PC-9 (cell line): ENCODE measurements at regions of chr1 and their contacts with region 1.

Region 1: DNA sequence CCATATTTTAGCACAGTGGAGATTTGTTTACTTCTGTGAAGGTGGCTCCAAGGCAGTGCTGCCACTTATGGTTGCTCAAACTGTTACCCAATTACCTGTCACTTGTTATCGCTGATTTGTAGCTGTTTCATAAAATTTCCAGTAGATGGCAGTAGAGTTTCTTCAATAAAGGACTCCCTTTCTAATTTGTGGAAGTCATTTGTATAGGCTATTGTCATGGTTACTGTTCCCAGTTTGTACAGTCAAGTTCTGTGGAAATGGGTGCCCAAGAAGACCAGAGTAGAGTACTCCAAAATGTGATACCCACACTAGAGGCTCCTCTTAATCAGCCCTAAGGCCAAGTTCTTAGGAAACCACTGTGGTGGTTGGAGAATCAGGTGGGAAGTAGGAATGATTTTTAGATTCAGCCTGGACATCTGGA is 186.1 kb downstream of the CLEC20A start:
- DNase-seq: peak; percentile 15 to 86
- H3K4me3 ChIP-seq: no peak overlapping the region
- H3K27ac ChIP-seq: no peak overlapping the region
- H3K4me1 ChIP-seq: peaks cover 34% of the 10 kb centered on the region
- H3K27me3 ChIP-seq: no peaks in the 10 kb centered on the region
- CTCF ChIP-seq: peak; percentile 88

Region 2: GRCh38 chr1:178344513-178345082 is 33.9 kb after region 1 on chr1:
- CTCF ChIA-PET with region 1: interaction called, 4 read pairs
- POLR2A ChIA-PET with region 1: no interaction called
- intact Hi-C with region 1: loop called (anchors 5 kb)
- DNase-seq: peak; percentile 23 to 70
- H3K4me3 ChIP-seq: no peak overlapping the region
- H3K27ac ChIP-seq: peak overlapping the region; percentile 56
- H3K4me1 ChIP-seq: peaks cover 43% of the 10 kb centered on the region
- H3K27me3 ChIP-seq: no peaks in the 10 kb centered on the region
- CTCF ChIP-seq: peak; percentile 52; the same call in 1 of the 2 replicates

Region 3: DNA sequence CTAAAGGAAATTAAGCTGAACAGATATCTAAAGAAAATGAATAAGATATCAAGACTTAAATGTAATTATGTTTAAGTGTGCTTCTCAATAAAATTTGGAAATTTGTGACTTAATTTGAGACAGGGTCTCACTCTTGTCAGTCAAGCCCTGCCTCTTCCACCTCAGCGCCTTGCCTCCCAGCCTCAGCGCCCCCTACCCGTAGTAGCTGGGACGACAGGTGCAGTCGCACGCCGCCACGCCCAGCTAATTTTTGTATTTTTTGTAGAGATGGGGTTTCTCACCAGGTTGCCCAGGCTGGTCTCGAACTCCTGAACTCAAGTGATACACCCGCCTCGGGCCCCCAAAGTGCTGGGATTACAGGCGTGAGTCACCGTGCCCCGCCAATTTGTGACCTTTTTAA is 69.1 kb after region 1 on chr1:
- CTCF ChIA-PET with region 1: interaction called, 18 read pairs
- POLR2A ChIA-PET with region 1: no interaction called
- intact Hi-C with region 1: no loop called
- DNase-seq: no peak
- H3K4me3 ChIP-seq: no peak overlapping the region
- H3K27ac ChIP-seq: no peak overlapping the region
- H3K4me1 ChIP-seq: peaks cover 13% of the 10 kb centered on the region
- H3K27me3 ChIP-seq: no peaks in the 10 kb centered on the region
- CTCF ChIP-seq: no peak

Region 4: DNA sequence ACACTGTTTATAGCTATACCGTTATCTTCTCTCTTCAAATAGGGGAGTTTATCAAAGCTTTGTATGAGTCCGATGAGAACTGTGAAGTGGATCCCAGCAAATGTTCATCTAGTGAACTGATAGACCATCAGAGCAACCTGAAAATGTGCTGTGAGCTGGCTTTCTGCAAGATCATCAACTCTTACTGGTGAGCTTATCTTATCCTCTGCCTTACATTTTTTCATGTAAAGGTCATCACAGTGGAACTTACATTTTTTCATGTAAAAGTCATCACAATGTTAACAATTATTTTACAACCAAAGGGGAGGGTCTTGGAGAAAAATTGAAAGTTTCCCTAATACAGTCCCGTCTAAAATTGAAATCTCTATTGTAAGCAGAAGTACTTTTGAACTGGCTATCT is 140.8 kb after region 1 on chr1:
- CTCF ChIA-PET with region 1: no interaction called
- POLR2A ChIA-PET with region 1: interaction called, 3 read pairs
- intact Hi-C with region 1: loop called (anchors 5 kb)
- DNase-seq: peak in 1 of 2 experiments; percentile 39
- H3K4me3 ChIP-seq: no peak overlapping the region
- H3K27ac ChIP-seq: no peak overlapping the region
- H3K4me1 ChIP-seq: peaks cover 10% of the 10 kb centered on the region; the same call in 1 of the 2 replicates
- H3K27me3 ChIP-seq: no peaks in the 10 kb centered on the region
- CTCF ChIP-seq: no peak

Region 5: DNA sequence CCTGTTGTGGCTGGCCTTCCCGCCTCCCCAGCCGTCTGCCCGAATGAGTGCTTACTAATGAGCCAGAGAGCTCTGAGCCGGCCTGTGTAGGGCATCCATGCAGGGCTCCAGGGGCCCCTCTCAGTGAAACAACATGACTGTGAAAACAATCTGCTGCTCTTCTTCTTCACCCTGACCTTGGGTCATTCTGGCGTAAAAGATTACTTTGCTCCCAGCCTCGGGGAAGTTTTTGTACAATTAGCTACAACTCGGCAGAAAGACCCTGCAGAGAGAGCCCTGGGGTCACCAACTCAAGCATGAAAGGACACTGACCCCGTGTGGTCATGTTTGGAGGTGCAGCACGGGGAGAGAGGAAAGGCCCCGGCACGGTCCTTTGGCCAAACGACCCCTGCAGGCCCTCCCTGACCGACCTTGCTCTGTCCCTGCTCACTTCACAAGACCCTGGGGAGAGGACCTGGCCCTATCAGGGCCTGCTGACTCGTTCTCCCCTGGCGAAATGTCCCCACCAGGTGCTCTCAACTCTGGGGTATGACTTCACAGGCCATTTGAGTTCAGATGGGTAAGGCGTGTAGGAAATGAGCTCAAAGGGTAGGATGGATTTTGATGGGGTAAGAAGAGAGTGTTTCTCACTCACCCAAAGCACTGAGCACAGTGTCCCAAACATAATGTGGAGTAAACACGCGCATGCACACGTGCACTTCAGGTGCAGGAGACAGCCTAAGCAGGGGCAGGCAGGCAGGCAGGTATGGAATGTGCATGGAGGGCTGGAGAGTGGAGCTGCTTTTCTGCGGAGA is 692.1 kb after region 1 on chr1:
- CTCF ChIA-PET with region 1: interaction called, 3 read pairs
- POLR2A ChIA-PET with region 1: no interaction called
- intact Hi-C with region 1: loop called (anchors 2 kb)
- DNase-seq: peak in 1 of 2 experiments; percentile 62
- H3K4me3 ChIP-seq: peak overlapping the region; percentile 5; the same call in 1 of the 2 replicates
- H3K27ac ChIP-seq: no peak overlapping the region
- H3K4me1 ChIP-seq: peaks cover 11% of the 10 kb centered on the region
- H3K27me3 ChIP-seq: no peaks in the 10 kb centered on the region
- CTCF ChIP-seq: peak; percentile 97

Region 6: GRCh38 chr1:179081687-179082332 is 771.1 kb after region 1 on chr1 and contains the start of gene TOR3A:
- CTCF ChIA-PET with region 1: no interaction called
- POLR2A ChIA-PET with region 1: interaction called, 27 read pairs
- intact Hi-C with region 1: no loop called
- DNase-seq: peak; percentile 87 to 96
- H3K4me3 ChIP-seq: peak within 1 kb of the TSS; percentile 79
- H3K27ac ChIP-seq: peak within 1 kb of the TSS; percentile 76
- H3K4me1 ChIP-seq: peaks cover 28% of the 10 kb centered on the region
- H3K27me3 ChIP-seq: no peaks in the 10 kb centered on the region
- CTCF ChIP-seq: no peak
- total RNA-seq, gene TOR3A: 31.6 and 35.6 TPM in 2 replicates